ENCODE measurements at regions of chr5 and their contacts with region 1.

Region 1: DNA sequence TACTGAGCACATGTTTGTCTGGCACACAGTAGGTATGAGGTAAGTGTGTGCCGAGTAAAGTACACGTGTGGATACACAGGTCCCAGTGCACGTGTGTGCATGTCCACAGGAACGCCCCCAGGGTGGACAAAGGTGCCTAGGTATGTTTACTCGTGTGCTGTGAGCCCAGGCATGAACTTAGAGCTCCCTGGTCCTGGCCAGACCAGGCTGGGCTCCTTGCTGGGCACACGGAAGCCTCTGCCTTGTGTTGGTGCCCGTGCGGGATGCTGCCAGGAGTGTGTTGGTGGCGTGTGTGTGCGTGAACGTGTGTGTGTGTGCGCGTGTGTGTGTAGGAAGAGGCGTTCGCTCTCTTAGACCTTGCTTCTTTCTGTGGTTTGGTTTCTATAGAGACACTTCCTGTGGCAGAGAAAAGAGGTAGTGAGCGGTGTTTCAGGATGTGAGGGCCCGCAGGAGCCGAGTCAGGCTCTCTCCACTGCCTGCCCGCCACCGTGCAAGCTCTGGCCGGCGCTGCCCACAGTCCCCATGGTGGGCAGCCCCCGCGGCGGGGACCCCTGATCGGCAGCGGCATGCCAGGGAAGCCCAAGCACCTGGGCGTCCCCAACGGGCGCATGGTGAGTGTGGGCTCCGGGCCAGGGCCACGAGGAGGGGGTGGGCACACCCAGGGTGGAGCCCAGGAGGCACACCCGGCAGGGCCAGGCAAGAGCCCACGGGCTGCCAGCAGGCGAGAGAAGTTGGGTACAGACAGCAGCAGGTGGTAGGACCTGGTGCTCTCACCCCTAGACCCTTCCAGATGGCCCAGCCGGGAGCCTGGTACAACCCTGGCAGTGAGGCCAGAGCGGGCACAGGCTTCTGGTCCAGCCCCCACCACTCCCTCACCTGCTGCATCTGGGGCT is at the start of gene RGS14:
- DNase-seq: peak in 1 of 4 donors; percentile 35
- ATAC-seq: no peak
- H3K4me3 ChIP-seq: no peak within 1 kb of the TSS
- H3K27ac ChIP-seq: no peak within 1 kb of the TSS
- H3K4me1 ChIP-seq: peaks cover 7% of the 10 kb centered on the region
- H3K27me3 ChIP-seq: no peaks in the 10 kb centered on the region
- CTCF ChIP-seq: no peak
- POLR2A ChIP-seq: no peak
- total RNA-seq, gene RGS14: 15.0 to 39.2 TPM

Region 2: DNA sequence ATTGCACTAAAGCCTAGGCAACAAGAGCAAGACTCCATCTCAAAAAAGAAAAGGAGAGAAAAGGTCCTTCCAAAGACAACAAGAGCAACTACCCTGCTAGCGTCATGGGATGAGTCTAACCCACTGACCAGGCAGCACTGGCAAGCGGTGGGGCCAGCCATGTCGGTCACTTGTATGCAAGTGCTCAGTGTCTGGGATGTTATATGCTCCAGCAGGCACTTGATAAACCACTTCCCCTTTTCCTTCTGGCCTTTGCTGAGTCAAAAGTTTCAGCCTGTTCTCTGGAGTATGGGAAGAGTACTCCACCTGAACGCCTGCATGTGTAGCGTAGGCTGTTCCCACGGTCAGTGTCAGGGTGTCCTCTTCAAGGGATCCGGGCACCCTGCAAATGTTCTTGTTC is 36.8 kb before region 1 on chr5:
- intact Hi-C with region 1: loop called (anchors 5 kb)
- DNase-seq: peak in 1 of 4 donors; percentile 51
- ATAC-seq: no peak
- H3K4me3 ChIP-seq: no peak overlapping the region
- H3K27ac ChIP-seq: no peak overlapping the region
- H3K4me1 ChIP-seq: peaks cover 22% of the 10 kb centered on the region
- H3K27me3 ChIP-seq: no peaks in the 10 kb centered on the region
- CTCF ChIP-seq: no peak
- POLR2A ChIP-seq: no peak

Measured in body of pancreas (tissue), 4 donors.